CD4-positive, alpha-beta T cell (primary cell): ENCODE measurements at regions of chr14 and their contacts with region 1.

Region 1: GRCh38 chr14:49585803-49586672 is at the start of gene RPS29:
- DNase-seq: peak; percentile 95 to 100 (median 98)
- ATAC-seq: peak; percentile 77
- H3K4me3 ChIP-seq: peak within 1 kb of the TSS; percentile 89
- H3K4me3 Mint-ChIP-seq: peak within 1 kb of the TSS; percentile 90
- H3K27ac ChIP-seq: peak within 1 kb of the TSS; percentile 93 to 95
- H3K27ac Mint-ChIP-seq: peak within 1 kb of the TSS; percentile 99
- H3K4me1 ChIP-seq: peaks cover 33% of the 10 kb centered on the region
- H3K4me1 Mint-ChIP-seq: peaks cover 52% of the 10 kb centered on the region
- H3K27me3 ChIP-seq: no peaks in the 10 kb centered on the region
- H3K27me3 Mint-ChIP-seq: peaks cover 10% of the 10 kb centered on the region
- CTCF ChIP-seq: no peak
- total RNA-seq, gene RPS29: 3,356 to 3,996 TPM

Region 2: DNA sequence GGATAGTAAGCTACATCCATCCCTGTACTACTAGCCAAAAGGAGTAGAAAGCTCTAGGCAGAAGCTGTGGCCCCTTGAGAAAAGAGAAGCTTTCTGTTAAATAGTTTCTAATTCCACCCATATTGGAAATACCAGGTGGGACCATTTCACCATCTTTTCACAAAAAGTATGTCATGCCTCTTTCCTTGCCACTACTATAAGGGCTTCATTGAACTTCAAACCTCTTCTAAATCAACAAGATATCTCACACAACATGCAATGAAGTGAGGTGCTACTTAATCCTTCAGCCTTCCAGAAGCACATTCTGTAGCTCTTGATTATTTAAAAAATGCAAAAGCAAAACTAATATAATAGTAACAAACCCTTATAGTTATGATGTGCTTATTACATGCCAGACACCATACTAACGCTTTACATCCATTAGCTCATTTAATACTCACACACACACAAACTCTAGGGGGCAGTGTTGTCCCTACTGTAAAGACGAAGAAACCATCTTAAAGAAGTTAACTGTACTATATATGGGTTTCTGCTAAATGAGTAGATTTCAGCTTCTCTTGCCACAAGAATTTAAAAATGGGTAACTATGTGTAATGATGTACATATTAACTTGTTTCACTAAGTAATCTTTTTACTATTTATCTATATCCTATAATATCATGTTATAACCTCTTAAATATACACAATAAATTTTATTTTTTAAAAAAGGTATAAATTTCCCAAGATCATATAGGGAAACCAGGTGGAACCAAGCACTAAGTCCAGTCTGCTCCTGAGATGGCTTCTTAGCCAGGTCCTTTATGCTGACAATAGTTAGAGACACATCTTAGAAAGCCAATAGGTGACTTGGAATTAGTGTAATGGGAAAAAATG is 124.3 kb before region 1 on chr14:
- CTCF ChIA-PET with region 1: interaction called, 10 read pairs
- POLR2A ChIA-PET with region 1: interaction called, 18 read pairs
- intact Hi-C with region 1: loop called in 1 of 2 experiments (anchors 5 kb)
- DNase-seq: peak in 13 of 14 experiments; percentile 4 to 86 (median 46)
- ATAC-seq: peak; percentile 97
- H3K4me3 ChIP-seq: no peak overlapping the region
- H3K4me3 Mint-ChIP-seq: no peak overlapping the region
- H3K27ac ChIP-seq: no peak overlapping the region
- H3K27ac Mint-ChIP-seq: no peak overlapping the region
- H3K4me1 ChIP-seq: no peaks in the 10 kb centered on the region
- H3K4me1 Mint-ChIP-seq: no peaks in the 10 kb centered on the region
- H3K27me3 ChIP-seq: no peaks in the 10 kb centered on the region
- H3K27me3 Mint-ChIP-seq: peaks cover 2% of the 10 kb centered on the region
- CTCF ChIP-seq: peak; percentile 73

Region 3: DNA sequence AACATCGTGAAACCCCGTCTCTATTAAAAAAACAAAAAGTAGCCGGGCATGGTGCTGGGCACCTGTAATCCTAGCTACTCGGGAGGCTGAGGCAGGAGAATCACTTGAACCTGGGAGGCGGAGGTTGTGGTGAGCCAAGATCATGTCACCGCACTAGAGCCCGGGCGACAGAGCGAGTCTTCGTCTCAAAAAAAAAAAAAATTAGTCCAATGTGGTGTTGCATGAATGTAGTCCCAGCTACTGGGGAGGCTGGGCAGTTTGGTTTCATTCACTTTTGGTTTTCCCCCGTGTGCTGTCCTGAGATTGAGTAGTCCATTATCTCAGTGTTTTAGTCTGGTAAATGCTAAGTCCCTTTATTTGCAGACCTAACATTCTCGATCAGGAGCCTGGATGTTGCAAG is 19.3 kb before region 1 on chr14:
- CTCF ChIA-PET with region 1: no interaction called
- POLR2A ChIA-PET with region 1: no interaction called
- intact Hi-C with region 1: no loop called
- DNase-seq: no peak
- ATAC-seq: no peak
- H3K4me3 ChIP-seq: no peak overlapping the region
- H3K4me3 Mint-ChIP-seq: no peak overlapping the region
- H3K27ac ChIP-seq: no peak overlapping the region
- H3K27ac Mint-ChIP-seq: no peak overlapping the region
- H3K4me1 ChIP-seq: no peaks in the 10 kb centered on the region
- H3K4me1 Mint-ChIP-seq: no peaks in the 10 kb centered on the region
- H3K27me3 ChIP-seq: no peaks in the 10 kb centered on the region
- H3K27me3 Mint-ChIP-seq: no peaks in the 10 kb centered on the region
- CTCF ChIP-seq: no peak

Region 4: GRCh38 chr14:49598485-49599300 is 12.7 kb after region 1 on chr14 and contains the start of gene LRR1:
- CTCF ChIA-PET with region 1: interaction called, 43 read pairs
- POLR2A ChIA-PET with region 1: interaction called, 141 read pairs
- intact Hi-C with region 1: loop called (anchors 1 kb)
- DNase-seq: peak; percentile 72 to 91 (median 84)
- ATAC-seq: peak; percentile 75
- H3K4me3 ChIP-seq: peak within 1 kb of the TSS; percentile 98
- H3K4me3 Mint-ChIP-seq: peak within 1 kb of the TSS; percentile 97
- H3K27ac ChIP-seq: peak within 1 kb of the TSS; percentile 91 to 95
- H3K27ac Mint-ChIP-seq: peak within 1 kb of the TSS; percentile 98
- H3K4me1 ChIP-seq: peaks cover 13% of the 10 kb centered on the region
- H3K4me1 Mint-ChIP-seq: peaks cover 43% of the 10 kb centered on the region
- H3K27me3 ChIP-seq: no peaks in the 10 kb centered on the region
- H3K27me3 Mint-ChIP-seq: no peaks in the 10 kb centered on the region
- CTCF ChIP-seq: no peak
- total RNA-seq, gene LRR1: 3.2 to 5.8 TPM

Region 5: GRCh38 chr14:49620182-49621113 is 34.4 kb after region 1 on chr14 and contains the starts of genes MGAT2 and RPL36AL:
- CTCF ChIA-PET with region 1: interaction called, 40 read pairs
- POLR2A ChIA-PET with region 1: interaction called, 180 read pairs
- intact Hi-C with region 1: loop called (anchors 1 to 2 kb)
- DNase-seq: peak; percentile 84 to 97 (median 91)
- ATAC-seq: peak; percentile 79
- H3K4me3 ChIP-seq: peak within 1 kb of the TSS; percentile 95
- H3K4me3 Mint-ChIP-seq: peak within 1 kb of the TSS; percentile 99
- H3K27ac ChIP-seq: peak within 1 kb of the TSS; percentile 98 to 99
- H3K27ac Mint-ChIP-seq: peak within 1 kb of the TSS; percentile 100
- H3K4me1 ChIP-seq: peaks cover 36% of the 10 kb centered on the region
- H3K4me1 Mint-ChIP-seq: peaks cover 73% of the 10 kb centered on the region
- H3K27me3 ChIP-seq: no peaks in the 10 kb centered on the region
- H3K27me3 Mint-ChIP-seq: no peaks in the 10 kb centered on the region
- CTCF ChIP-seq: peak; percentile 22
- total RNA-seq, gene MGAT2: 15.0 to 15.1 TPM
- total RNA-seq, gene RPL36AL: 339 to 370 TPM

Region 6: GRCh38 chr14:49692811-49693734 is 107.0 kb after region 1 on chr14 and contains the start of gene KLHDC1:
- CTCF ChIA-PET with region 1: interaction called, 5 read pairs
- POLR2A ChIA-PET with region 1: interaction called, 11 read pairs
- intact Hi-C with region 1: loop called in 1 of 2 experiments (anchors 5 kb)
- DNase-seq: peak; percentile 66 to 90 (median 78)
- ATAC-seq: peak; percentile 85
- H3K4me3 ChIP-seq: peak within 1 kb of the TSS; percentile 69
- H3K4me3 Mint-ChIP-seq: peak within 1 kb of the TSS; percentile 97
- H3K27ac ChIP-seq: peak within 1 kb of the TSS; percentile 60 to 70
- H3K27ac Mint-ChIP-seq: peak within 1 kb of the TSS; percentile 88
- H3K4me1 ChIP-seq: peaks cover 10% of the 10 kb centered on the region
- H3K4me1 Mint-ChIP-seq: peaks cover 50% of the 10 kb centered on the region
- H3K27me3 ChIP-seq: no peaks in the 10 kb centered on the region
- H3K27me3 Mint-ChIP-seq: no peaks in the 10 kb centered on the region
- CTCF ChIP-seq: no peak
- total RNA-seq, gene KLHDC1: 9.8 to 11.8 TPM

Region 7: DNA sequence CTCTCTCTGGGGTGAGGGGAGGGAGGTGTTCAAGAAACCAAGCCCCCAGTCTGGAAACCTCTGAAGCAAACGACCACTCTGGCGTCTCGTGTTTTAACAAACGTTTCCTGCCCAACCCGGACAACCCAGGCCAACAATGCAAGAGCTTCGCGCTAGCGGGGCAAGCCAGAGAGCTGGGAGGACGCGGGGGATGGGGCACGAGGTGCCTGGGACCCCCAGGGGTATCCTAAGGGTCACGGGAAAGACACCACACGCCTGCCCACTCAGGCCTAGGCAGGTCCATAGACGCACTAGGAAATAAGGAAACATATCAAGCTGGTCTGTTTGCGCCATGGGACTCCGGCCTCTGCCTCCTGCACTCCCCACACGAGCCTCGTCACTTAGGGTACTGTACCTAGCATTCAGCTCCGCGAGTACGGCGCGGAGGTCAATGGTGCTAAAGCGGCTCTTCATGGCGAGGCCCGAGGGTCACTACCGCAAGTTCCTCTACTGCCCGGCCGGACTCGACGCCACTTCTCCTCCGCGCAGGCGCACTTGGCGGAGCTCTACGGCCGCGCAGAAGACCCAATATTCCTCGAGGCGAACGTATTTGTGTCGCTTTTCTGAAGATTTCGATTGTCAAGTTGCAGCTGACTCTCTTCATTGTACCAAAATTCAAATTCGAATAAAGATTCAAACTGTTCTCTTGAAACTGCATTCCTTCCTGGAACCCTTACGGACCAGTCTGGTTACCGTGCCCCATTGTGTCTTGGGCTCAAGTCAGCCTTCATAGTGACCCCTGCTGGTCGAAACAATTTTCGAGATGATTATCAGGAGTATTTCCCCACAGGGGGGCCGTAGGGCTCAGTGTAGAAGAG is 266.5 kb after region 1 on chr14 and contains the start of gene NEMF:
- CTCF ChIA-PET with region 1: interaction called, 4 read pairs
- POLR2A ChIA-PET with region 1: interaction called, 25 read pairs
- intact Hi-C with region 1: no loop called
- DNase-seq: peak; percentile 67 to 91 (median 72)
- ATAC-seq: peak; percentile 75
- H3K4me3 ChIP-seq: peak within 1 kb of the TSS; percentile 97
- H3K4me3 Mint-ChIP-seq: peak within 1 kb of the TSS; percentile 99
- H3K27ac ChIP-seq: peak within 1 kb of the TSS; percentile 64 to 80
- H3K27ac Mint-ChIP-seq: peak within 1 kb of the TSS; percentile 91
- H3K4me1 ChIP-seq: peaks cover 17% of the 10 kb centered on the region
- H3K4me1 Mint-ChIP-seq: peaks cover 46% of the 10 kb centered on the region
- H3K27me3 ChIP-seq: no peaks in the 10 kb centered on the region
- H3K27me3 Mint-ChIP-seq: no peaks in the 10 kb centered on the region
- CTCF ChIP-seq: peak; percentile 89
- total RNA-seq, gene NEMF: 96.0 to 97.7 TPM

Region 8: GRCh38 chr14:50116181-50116956 is 530.3 kb after region 1 on chr14 and contains the start of gene VCPKMT:
- CTCF ChIA-PET with region 1: no interaction called
- POLR2A ChIA-PET with region 1: interaction called, 10 read pairs
- intact Hi-C with region 1: no loop called
- DNase-seq: peak; percentile 90 to 98 (median 96)
- ATAC-seq: peak; percentile 98
- H3K4me3 ChIP-seq: peak within 1 kb of the TSS; percentile 75
- H3K4me3 Mint-ChIP-seq: peak within 1 kb of the TSS; percentile 99
- H3K27ac ChIP-seq: peak within 1 kb of the TSS; percentile 81 to 95
- H3K27ac Mint-ChIP-seq: peak within 1 kb of the TSS; percentile 99
- H3K4me1 ChIP-seq: peaks cover 15% of the 10 kb centered on the region
- H3K4me1 Mint-ChIP-seq: peaks cover 31% of the 10 kb centered on the region
- H3K27me3 ChIP-seq: no peaks in the 10 kb centered on the region
- H3K27me3 Mint-ChIP-seq: no peaks in the 10 kb centered on the region
- CTCF ChIP-seq: no peak
- total RNA-seq, gene VCPKMT: 30.4 to 32.4 TPM